ENCODE measurements at regions of chr1 and their contacts with region 1.

Region 1: DNA sequence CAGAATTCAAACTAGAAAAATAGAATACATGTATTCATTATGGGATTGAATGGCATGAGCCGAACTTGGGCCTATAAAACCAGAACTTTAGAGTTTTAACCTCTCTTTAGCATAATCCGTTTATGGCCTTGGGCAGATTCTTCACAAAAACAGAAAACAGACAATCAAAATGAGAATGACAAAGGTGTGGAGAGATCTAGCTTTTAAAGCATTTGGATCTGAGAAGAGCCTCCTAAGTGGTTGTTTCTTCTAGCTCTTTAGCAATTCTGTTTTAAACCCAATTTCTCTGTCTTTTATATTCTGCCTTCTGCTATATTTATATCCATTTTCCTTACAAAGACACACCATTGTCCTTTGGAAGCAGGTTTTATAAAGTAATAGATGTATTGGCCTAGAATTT is 160.2 kb downstream of the RPS6KC1 start:
- DNase-seq: no peak
- ATAC-seq: no peak
- H3K4me3 ChIP-seq: no peak overlapping the region
- H3K27ac ChIP-seq: no peak overlapping the region
- H3K4me1 ChIP-seq: no peaks in the 10 kb centered on the region
- H3K27me3 ChIP-seq: no peaks in the 10 kb centered on the region
- CTCF ChIP-seq: no peak
- POLR2A ChIP-seq: no peak
- RAD21 ChIP-seq: no peak

Region 2: DNA sequence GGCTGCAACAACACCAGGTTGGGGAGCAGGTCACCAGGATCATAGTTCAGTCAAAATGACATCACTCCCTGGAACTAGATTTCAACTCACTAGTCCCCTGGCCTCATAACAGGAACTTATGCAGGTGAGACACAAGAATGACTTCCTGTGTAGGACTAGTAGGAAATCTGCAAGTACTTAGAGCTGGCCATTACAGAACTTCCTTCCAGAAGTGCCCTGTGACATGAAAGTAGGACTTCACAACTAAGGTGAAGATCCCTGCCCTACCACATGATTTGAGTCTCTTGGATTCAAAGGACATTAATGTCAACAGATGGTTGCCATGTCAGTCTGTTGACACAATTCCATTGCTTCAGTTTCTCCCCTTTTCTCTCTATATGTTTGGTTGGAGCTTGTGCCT is 62.9 kb after region 1 on chr1:
- CTCF ChIA-PET with region 1: no interaction called
- POLR2A ChIA-PET with region 1: no interaction called
- RAD21 ChIA-PET with region 1: no interaction called
- intact Hi-C with region 1: loop called (anchors 10 kb)
- DNase-seq: no peak
- ATAC-seq: no peak
- H3K4me3 ChIP-seq: no peak overlapping the region
- H3K27ac ChIP-seq: no peak overlapping the region
- H3K4me1 ChIP-seq: no peaks in the 10 kb centered on the region
- H3K27me3 ChIP-seq: no peaks in the 10 kb centered on the region
- CTCF ChIP-seq: no peak
- POLR2A ChIP-seq: no peak
- RAD21 ChIP-seq: no peak